T-cell (primary cell): ENCODE measurements at regions of chr2 and their contacts with region 1.

Region 1: DNA sequence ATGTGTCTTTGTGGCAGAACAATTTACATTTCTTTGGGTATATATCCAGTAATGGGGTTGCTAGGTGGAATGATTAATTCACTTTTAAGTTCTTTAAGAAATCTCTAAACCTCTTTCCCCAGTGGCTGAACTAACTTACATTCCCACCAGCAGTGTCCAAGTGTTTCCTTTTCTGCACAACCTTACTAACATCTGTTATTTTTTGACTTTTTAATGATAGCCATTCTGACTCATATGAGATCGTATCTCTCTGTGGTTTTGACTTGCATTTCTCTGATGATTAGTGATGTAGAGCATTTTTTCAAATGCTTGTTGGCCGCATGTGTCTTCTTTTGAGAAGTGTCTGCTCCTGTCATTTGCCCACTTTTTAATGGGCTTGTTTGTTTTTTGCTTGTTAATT is 43.1 kb upstream of the PTH2R start:
- DNase-seq: no peak
- ATAC-seq: no peak
- H3K4me3 ChIP-seq: no peak overlapping the region
- H3K4me3 Mint-ChIP-seq: no peak overlapping the region
- H3K27ac ChIP-seq: no peak overlapping the region
- H3K27ac Mint-ChIP-seq: no peak overlapping the region
- H3K4me1 ChIP-seq: no peaks in the 10 kb centered on the region
- H3K4me1 Mint-ChIP-seq: peaks cover 0 to 9% (median 4%) of the 10 kb centered on the region in 3 donors
- H3K27me3 ChIP-seq: no peaks in the 10 kb centered on the region
- H3K27me3 Mint-ChIP-seq: peaks cover 3 to 7% of the 10 kb centered on the region in 2 donors

Region 2: DNA sequence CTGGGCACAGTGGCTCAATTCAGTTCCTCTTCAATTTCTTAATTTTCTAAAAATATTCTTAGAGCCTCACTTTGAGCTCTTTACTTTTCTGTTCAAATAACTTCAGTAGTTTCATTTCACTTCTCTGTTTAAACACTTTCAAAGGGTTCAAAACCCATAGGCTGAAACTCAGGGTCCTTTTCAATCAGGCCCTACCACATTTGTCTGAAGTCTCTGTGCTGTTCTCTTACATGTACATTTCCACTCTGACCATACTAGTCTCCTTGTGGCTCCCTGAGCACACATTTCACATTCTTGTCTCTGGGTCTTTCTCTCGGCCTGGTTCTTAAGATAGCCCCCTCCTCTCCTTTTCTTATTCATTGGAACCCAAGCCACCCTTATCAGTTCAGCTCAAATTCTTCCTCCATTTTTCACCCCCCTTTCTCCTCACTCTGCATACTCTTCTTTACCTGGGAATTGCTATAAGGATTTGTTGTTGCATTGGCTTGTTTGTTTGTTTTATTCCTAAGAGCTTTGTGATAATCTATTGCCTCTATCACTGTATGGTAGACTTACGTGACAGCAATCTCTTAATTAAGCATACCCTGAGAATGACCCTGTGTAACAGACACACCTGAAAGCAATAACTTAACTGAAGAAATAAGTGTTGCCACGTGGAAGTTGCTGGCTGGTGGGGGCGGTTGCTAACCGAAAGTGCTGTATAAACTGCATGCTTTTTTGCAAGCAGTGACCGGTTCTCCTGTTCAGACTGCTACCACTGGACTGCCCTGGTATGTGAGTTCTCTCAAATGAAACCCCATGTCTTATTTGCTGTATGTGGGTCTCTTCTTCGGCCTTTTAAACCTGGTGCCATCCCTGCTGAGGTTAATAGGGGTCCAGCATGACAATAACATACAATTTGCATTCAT is 1889.5 kb after region 1 on chr2:
- CTCF ChIA-PET with region 1: interaction called in 1 of 2 experiments, 11 read pairs
- POLR2A ChIA-PET with region 1: no interaction called
- DNase-seq: no peak
- ATAC-seq: no peak
- H3K4me3 ChIP-seq: no peak overlapping the region
- H3K4me3 Mint-ChIP-seq: no peak overlapping the region
- H3K27ac ChIP-seq: no peak overlapping the region
- H3K27ac Mint-ChIP-seq: no peak overlapping the region
- H3K4me1 ChIP-seq: no peaks in the 10 kb centered on the region
- H3K4me1 Mint-ChIP-seq: no peaks in the 10 kb centered on the region
- H3K27me3 ChIP-seq: no peaks in the 10 kb centered on the region
- H3K27me3 Mint-ChIP-seq: no peaks in the 10 kb centered on the region